OCI-LY7 (cell line): ENCODE measurements at regions of chr22 and their contacts with region 1.

Region 1: DNA sequence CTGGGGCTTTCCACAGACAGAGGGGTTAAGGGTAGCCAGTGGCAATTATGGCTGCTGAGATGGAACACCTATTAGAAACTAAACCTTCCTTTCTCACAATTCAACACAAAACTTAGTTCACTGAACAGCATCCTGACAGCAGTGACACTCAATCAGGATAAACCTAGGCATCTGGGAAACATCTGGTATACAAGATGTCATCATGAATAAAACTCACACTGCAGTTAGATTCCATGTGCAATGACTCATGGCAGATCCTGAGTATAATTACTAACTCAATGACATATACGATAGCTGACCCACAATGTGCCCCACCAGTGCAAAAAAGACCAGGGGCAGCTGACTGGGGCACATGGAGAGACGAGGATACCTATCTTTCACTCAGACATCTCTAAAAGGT is 17.7 kb downstream of the RBFOX2 start:
- DNase-seq: no peak
- H3K4me3 ChIP-seq: no peak overlapping the region
- H3K27ac ChIP-seq: no peak overlapping the region
- H3K4me1 ChIP-seq: peaks cover 82% of the 10 kb centered on the region
- CTCF ChIP-seq: no peak

Region 2: DNA sequence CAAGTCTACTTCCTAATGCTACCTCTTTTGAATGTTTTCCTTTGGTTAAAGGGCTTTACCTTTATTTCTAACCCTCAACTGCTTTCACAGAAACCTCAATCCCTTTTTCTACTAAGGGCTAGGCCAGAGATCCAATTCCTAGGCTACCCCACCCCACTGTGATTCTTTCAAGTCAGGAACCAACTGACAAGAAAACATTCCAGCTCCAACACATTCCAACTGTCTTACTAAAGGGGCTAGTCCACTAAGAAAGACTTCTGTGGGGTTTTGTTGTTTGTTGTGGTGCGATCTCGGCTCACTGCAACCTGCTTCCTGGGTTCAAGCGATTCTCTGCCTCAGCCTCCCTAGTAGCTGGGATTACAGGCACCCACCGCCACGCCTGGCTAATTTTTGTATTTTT is 141.9 kb before region 1 on chr22:
- CTCF ChIA-PET with region 1: no interaction called
- POLR2A ChIA-PET with region 1: no interaction called
- intact Hi-C with region 1: loop called (anchors 10 kb)
- DNase-seq: no peak
- H3K4me3 ChIP-seq: no peak overlapping the region
- H3K27ac ChIP-seq: peak overlapping the region; percentile 99
- H3K4me1 ChIP-seq: peaks cover 93% of the 10 kb centered on the region
- CTCF ChIP-seq: no peak

Region 3: DNA sequence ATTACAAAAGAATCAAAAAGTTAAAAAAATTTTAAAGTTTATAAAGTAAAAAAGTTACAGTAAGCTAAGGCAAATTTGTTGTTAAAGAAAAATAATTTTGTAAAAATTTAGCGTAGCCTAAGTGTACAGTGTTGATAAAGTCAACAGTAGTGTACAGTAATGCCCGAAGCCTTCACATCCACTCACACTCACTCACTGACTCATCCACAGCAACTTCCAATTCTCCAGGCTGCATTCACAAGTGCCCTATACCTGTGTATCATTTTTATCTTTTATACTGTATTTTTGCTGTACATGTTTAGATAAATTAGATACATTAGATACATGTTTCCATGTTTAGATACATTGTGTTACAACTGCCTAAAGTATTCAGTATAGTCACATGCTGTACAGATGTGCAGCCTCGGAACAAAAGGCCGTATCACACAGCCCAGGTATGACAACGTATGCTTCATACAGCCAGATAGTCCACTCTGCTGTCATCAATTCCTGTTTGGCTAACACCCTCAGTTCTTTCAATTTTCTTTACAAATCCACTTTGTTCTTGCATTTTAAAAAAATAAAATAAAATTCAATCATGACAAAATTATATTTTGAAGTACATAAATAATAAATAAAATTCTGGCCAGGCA is 63.0 kb before region 1 on chr22:
- CTCF ChIA-PET with region 1: no interaction called
- POLR2A ChIA-PET with region 1: interaction called, 10 read pairs
- intact Hi-C with region 1: loop called (anchors 5 kb)
- DNase-seq: no peak
- H3K4me3 ChIP-seq: no peak overlapping the region
- H3K27ac ChIP-seq: no peak overlapping the region
- H3K4me1 ChIP-seq: no peaks in the 10 kb centered on the region
- CTCF ChIP-seq: no peak